Posterior cingulate gyrus (tissue), 11 donors: ENCODE measurements at regions of chr12 and their contacts with region 1.

Region 1: GRCh38 chr12:128259556-128260070 is 7.4 kb upstream of the TMEM132C start:
- DNase-seq: peak in 8 of 10 donors; percentile 57 to 92 (median 68)

Region 2: DNA sequence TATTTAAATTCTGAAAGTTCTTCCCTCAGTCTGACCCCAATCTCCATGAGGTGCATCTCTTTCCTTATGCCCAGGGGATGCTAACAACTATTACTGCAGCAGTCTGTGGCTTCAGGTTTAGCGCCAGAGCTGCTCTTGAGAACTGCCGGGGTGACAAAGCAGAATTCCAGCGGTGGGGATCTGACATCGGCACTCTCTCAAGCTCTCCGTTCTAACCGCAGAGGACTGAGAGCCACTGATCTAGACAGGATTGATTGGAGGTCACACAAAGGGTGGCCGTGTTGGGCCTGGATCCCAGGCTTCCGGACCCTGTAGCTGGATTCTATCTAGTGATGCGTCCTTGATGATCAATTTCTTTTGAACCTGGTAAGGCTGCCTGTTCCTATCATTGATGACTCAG is 148.3 kb before region 1 on chr12:
- intact Hi-C with region 1: no loop called
- DNase-seq: no peak

Region 3: GRCh38 chr12:128121424-128121823 is 138.2 kb before region 1 on chr12:
- intact Hi-C with region 1: no loop called
- DNase-seq: no peak

Region 4: DNA sequence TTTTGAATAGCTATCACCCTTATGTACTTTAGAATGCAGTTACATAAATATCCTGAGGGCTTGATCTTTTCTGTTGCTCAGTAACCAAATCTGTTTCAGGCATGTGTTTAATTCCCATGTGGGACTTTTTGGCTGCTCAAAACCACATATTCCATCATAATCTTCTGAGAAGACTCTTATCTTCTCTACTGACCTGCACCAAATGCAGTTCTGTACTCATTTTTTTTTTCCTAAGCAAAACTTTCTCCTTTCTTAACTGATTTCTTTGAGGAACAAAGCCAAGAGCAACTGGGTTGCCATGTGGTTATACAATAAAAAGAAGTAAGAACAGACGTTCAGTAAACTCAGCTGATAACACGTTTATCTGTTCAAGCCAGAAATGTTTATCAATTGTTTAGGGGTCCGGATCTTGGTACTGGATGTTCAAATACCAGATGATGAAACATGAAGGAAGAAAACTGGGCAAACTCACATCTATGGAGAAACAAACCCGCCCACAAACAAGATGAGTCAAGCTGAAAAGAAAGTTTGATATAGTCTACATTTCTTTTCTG is 57.4 kb after region 1 on chr12:
- intact Hi-C with region 1: no loop called
- DNase-seq: no peak

Region 5: DNA sequence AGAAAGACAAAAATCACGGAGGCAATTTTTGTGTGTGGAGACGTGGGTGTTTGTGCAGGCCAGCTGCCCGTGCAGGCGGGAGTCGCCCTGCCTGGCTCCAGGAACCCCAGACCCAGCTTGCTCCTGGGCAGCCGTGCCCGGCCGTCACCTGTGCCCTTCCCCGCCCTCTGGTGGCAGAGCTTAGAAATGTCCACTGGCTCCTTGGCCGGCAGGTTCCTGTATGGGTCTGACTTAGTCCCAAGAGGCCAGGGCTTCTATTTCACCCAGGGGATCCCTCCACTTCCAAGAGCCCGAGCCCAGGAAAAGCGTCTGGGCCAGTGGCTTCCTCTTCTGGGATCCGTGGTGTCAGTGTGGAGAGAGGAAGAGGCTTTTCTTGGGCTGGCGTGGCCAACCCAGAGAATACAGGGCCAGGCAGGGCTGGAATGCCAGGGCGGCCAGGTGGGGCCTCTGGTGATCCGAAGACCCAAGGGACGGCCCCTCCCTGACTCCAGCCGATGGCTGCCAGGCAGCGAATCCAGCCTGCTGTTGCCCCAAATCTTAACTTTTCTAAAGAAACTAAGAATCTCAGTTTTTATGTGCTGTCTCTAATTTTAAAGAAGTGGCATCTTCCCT is 128.3 kb after region 1 on chr12:
- intact Hi-C with region 1: loop called (anchors 1 kb)
- DNase-seq: peak; percentile 34 to 94 (median 69)

Region 6: DNA sequence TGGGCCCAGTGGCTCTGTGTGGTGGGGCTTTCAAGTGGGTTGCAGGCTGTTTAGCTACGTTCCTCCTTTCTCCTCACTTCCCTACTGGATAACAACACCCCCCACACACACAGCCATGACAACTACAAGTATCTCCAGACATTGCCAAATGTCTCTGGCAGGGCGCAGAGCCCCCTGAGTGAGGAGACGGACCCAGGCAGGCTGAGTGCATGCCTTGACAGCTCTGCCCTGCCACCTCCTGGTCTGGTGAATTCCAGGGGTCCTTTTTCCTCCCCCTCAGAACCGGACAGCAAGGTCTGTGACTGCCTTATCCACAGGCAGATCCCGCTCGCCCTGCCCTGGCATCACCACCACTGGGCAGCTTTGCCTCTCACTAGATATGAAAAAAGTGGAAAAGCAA is 283.8 kb after region 1 on chr12:
- intact Hi-C with region 1: loop called (anchors 2 kb)
- DNase-seq: peak in 1 of 10 donors; percentile 21

Region 7: DNA sequence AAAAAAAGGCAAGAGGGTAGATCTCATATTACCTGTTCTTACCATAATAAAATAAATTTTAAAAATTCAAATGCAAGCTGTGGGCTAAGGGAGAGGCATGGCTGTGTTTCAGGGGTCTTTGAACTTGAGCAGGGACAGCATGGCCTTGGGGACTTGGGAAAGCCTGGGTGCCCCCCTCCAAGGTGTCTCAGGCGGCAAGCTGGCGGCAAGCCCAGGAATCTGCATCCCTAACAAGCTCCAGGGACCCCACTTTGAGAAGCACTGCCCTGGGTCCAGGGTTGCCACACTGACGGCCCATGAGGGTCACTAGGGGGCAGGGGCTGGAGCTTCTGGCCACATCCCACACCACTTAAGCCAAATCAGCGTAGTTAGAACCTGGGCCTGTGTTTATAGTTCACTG is 370.4 kb after region 1 on chr12:
- intact Hi-C with region 1: no loop called
- DNase-seq: peak in 2 of 10 donors; percentile 55 to 71